Pancreas (tissue), 10 donors: ENCODE measurements at regions of chr14 and their contacts with region 1.

Region 1: GRCh38 chr14:37903343-37904191 is 304.1 kb upstream of the SSTR1 start:
- DNase-seq: peak in 1 of 6 donors; percentile 23
- ATAC-seq: peak in 3 of 4 donors; percentile 74 to 80 (median 79)
- H3K4me3 ChIP-seq: no peak overlapping the region
- H3K27ac ChIP-seq: no peak overlapping the region
- H3K4me1 ChIP-seq: no peaks in the 10 kb centered on the region
- H3K27me3 ChIP-seq: no peaks in the 10 kb centered on the region
- CTCF ChIP-seq: peak; percentile 26 to 59 (median 50)

Region 2: GRCh38 chr14:37013094-37013493 is 890.5 kb before region 1 on chr14:
- intact Hi-C with region 1: no loop called
- DNase-seq: no peak
- ATAC-seq: no peak
- H3K4me3 ChIP-seq: no peak overlapping the region
- H3K27ac ChIP-seq: no peak overlapping the region
- H3K4me1 ChIP-seq: no peaks in the 10 kb centered on the region
- H3K27me3 ChIP-seq: no peaks in the 10 kb centered on the region
- CTCF ChIP-seq: no peak

Region 3: DNA sequence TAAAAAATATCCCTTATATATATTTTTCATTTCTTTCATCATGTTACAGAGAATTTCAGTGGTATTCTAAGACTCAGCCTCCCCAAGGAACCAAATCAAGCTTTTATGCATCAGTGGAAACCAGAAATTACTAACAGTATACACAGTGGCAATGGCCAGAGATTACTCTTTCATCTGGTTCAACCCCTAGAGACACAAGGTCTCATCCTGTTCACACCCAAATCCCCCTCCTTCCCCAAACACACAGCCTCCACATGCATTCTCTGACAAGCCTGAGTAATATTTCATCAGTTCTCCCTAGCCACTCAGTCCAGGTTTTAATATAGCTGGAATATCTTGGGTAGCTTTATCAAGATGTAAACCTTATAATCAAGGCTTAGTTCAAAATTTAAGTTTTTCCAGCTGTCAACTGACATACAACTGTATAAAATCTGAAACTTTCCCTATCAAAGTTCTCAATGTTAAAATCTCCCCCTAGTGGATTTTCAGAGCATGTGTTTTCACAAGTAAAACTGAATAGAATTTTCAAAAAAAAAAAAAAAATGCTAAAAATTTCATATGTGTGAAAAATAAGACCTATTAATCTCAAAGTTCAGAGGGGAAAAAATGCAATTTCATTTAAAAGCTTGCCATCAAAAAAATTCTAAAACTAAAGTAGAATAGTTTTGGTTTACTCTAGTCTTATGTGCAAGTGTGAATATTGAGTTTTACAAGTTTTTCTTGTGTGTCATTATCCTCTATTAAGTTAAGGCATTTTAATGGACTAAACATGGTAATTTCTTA is 293.6 kb after region 1 on chr14:
- intact Hi-C with region 1: loop called in 1 of 3 experiments (anchors 10 kb)
- DNase-seq: no peak
- ATAC-seq: peak in 3 of 4 donors; percentile 44 to 52 (median 52)
- H3K4me3 ChIP-seq: no peak overlapping the region
- H3K27ac ChIP-seq: no peak overlapping the region
- H3K4me1 ChIP-seq: no peaks in the 10 kb centered on the region
- H3K27me3 ChIP-seq: no peaks in the 10 kb centered on the region
- CTCF ChIP-seq: peak; percentile 44 to 68 (median 56)